CD8-positive, alpha-beta T cell (primary cell): ENCODE measurements at regions of chr16 and their contacts with region 1.

Region 1: DNA sequence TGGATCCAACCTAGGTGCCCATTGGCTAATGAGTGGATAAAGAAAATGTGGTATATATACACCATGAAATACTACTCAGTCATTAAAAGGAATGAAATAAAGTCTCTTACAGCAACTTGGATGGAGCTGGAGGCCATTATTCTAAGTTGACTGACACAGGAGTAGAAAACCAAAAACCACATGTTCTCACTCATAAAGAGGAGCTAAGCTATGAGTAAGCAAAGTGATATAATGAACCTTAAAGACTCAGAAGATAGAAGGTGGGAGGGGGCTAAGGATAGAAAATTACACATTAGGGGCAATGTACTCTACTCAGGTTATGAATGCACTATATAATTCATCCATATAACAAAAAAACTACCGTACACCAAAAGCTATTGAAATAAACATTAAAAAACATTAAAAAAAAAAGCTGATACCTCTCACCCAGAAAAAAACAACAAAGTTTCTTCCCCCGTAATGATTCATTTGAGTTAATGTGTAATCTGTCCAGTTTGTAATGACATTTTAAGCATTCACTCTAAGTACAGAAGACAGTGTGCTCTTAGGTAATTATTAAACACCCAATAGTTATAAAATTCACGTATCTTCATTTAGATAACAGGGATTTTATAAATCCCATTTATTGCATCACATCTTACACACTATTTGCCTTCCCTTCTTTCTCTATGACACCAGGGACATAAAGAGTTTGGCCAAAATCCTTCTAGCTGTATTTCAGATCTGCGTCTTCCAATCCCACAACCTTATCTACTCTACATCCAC is 941.5 kb downstream of the CDH11 start:
- DNase-seq: no peak
- ATAC-seq: no peak
- H3K4me3 ChIP-seq: no peak overlapping the region
- H3K4me3 Mint-ChIP-seq: no peak overlapping the region
- H3K27ac ChIP-seq: no peak overlapping the region
- H3K27ac Mint-ChIP-seq: no peak overlapping the region
- H3K4me1 ChIP-seq: no peaks in the 10 kb centered on the region
- H3K4me1 Mint-ChIP-seq: no peaks in the 10 kb centered on the region
- H3K27me3 ChIP-seq: no peaks in the 10 kb centered on the region
- H3K27me3 Mint-ChIP-seq: no peaks in the 10 kb centered on the region
- CTCF ChIP-seq: no peak

Region 2: GRCh38 chr16:63995025-63995424 is 185.3 kb before region 1 on chr16:
- CTCF ChIA-PET with region 1: no interaction called
- POLR2A ChIA-PET with region 1: no interaction called
- intact Hi-C with region 1: no loop called
- DNase-seq: no peak
- ATAC-seq: no peak
- H3K4me3 ChIP-seq: no peak overlapping the region
- H3K4me3 Mint-ChIP-seq: no peak overlapping the region
- H3K27ac ChIP-seq: no peak overlapping the region
- H3K27ac Mint-ChIP-seq: no peak overlapping the region
- H3K4me1 ChIP-seq: no peaks in the 10 kb centered on the region
- H3K4me1 Mint-ChIP-seq: no peaks in the 10 kb centered on the region
- H3K27me3 ChIP-seq: no peaks in the 10 kb centered on the region
- H3K27me3 Mint-ChIP-seq: no peaks in the 10 kb centered on the region
- CTCF ChIP-seq: no peak

Region 3: GRCh38 chr16:64162613-64163375 is 17.5 kb before region 1 on chr16:
- CTCF ChIA-PET with region 1: no interaction called
- POLR2A ChIA-PET with region 1: no interaction called
- intact Hi-C with region 1: loop called in 1 of 2 experiments (anchors 1 kb)
- DNase-seq: no peak
- ATAC-seq: no peak
- H3K4me3 ChIP-seq: no peak overlapping the region
- H3K4me3 Mint-ChIP-seq: no peak overlapping the region
- H3K27ac ChIP-seq: no peak overlapping the region
- H3K27ac Mint-ChIP-seq: no peak overlapping the region
- H3K4me1 ChIP-seq: no peaks in the 10 kb centered on the region
- H3K4me1 Mint-ChIP-seq: no peaks in the 10 kb centered on the region
- H3K27me3 ChIP-seq: no peaks in the 10 kb centered on the region
- H3K27me3 Mint-ChIP-seq: no peaks in the 10 kb centered on the region
- CTCF ChIP-seq: no peak

Region 4: DNA sequence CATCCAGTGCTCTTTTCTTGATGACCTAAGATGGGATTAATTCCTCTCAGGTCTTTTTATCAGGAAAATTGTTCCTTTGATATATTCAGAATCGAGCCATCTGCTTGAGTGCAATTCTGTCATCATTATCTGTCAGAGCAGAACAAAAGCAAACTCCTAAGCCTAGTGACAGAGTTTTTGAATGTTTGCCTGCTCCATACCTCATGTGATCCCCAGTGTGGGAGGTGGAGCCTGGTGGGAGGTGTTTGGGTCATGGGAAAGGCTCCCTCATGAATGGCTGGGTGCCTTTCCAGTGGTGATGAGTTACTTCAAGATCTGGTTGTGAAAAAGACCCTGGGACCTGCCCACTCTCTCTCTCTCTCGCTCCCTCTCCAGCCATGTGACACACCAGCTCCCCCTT is 313.4 kb after region 1 on chr16:
- CTCF ChIA-PET with region 1: no interaction called
- POLR2A ChIA-PET with region 1: no interaction called
- intact Hi-C with region 1: no loop called
- DNase-seq: no peak
- ATAC-seq: no peak
- H3K4me3 ChIP-seq: no peak overlapping the region
- H3K4me3 Mint-ChIP-seq: no peak overlapping the region
- H3K27ac ChIP-seq: no peak overlapping the region
- H3K27ac Mint-ChIP-seq: no peak overlapping the region
- H3K4me1 ChIP-seq: no peaks in the 10 kb centered on the region
- H3K4me1 Mint-ChIP-seq: no peaks in the 10 kb centered on the region
- H3K27me3 ChIP-seq: no peaks in the 10 kb centered on the region
- H3K27me3 Mint-ChIP-seq: no peaks in the 10 kb centered on the region
- CTCF ChIP-seq: no peak